ENCODE measurements at regions of chr12 and their contacts with region 1.

Region 1: DNA sequence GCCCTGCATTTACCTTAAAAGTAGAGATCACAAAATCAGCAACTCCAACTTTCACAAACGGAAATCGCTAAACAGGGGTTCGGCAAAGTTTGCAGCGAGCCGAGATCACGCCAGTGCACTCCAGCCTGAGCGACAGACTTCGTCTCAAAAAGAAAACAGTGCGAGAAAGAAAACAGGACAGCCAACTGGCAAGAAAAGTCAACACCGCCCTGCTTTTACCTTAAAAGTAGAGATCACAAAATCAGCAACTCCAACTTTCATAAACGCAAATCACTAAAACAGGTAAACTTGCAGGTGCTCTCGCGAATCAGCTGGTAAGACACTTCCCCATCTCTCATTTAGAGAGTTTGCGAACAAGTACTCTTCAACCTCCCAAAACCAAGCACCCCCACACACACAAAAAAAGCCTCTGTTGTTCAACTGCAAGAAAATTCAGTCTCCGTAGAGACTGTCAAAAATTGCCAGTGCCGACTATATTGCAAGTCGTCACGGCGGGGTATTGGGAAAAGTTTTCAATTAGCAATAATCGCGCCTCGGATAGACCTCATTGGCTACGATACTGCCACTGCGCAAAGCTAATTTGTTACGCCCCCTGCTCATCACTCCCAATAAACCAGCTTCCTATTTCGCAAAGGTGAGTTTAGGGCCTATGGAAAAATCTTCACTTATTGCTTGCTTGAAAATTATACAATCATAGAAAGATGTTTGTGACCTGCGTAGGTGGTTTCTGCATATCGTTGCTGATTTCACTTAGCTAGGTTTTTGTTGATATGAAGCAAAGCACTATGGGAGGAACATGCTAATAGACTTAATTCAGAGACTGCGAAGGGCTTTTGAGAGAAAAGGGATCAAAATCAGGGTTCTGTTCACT is at the start of gene RNU4-1:
- DNase-seq: peak; percentile 62
- ATAC-seq: peak; percentile 40
- H3K4me3 Mint-ChIP-seq: no peak within 1 kb of the TSS
- H3K27ac Mint-ChIP-seq: no peak within 1 kb of the TSS
- H3K4me1 Mint-ChIP-seq: peaks cover 5% of the 10 kb centered on the region
- H3K27me3 Mint-ChIP-seq: no peaks in the 10 kb centered on the region
- total RNA-seq, gene RNU4-1: 1,307 to 1,401 TPM

Region 2: DNA sequence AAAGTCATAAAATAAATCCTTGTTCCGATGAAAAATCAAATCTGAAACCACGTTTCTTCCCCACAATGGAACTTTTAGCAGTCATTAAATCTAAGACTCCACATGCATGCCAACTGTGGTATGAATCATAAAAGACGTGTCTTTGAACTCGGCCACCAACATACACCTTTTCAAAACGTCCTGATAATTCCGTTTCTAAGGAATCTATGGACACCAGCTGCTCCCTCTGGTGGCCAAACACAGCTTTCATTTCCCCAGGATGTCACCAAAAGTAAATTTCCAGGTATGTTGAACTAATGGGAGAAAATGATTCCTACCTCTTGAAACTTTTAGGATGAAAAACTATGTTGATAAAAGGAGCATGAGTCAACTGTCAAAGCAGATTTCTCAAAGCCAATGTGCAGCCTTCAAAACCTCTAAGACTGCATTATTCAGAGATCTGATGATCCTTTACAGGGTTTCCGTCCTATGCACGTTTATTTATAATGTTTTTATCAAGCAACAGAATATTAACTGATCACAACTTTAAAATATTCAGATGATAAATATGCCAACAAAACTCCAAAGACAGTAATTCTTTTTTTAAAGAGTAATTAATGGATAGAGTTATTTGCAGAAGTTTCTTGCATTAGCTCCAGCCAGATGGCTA is 512.0 kb before region 1 on chr12:
- POLR2A ChIA-PET with region 1: no interaction called
- DNase-seq: no peak
- ATAC-seq: no peak
- H3K4me3 Mint-ChIP-seq: no peak overlapping the region
- H3K27ac Mint-ChIP-seq: no peak overlapping the region
- H3K4me1 Mint-ChIP-seq: peaks cover 5% of the 10 kb centered on the region
- H3K27me3 Mint-ChIP-seq: no peaks in the 10 kb centered on the region

Region 3: GRCh38 chr12:120007272-120007671 is 285.6 kb before region 1 on chr12:
- POLR2A ChIA-PET with region 1: interaction called, 22 read pairs
- DNase-seq: no peak
- ATAC-seq: peak; percentile 85
- H3K4me3 Mint-ChIP-seq: peak overlapping the region; percentile 67
- H3K27ac Mint-ChIP-seq: peak overlapping the region; percentile 90
- H3K4me1 Mint-ChIP-seq: peaks cover 49% of the 10 kb centered on the region
- H3K27me3 Mint-ChIP-seq: no peaks in the 10 kb centered on the region

Region 4: DNA sequence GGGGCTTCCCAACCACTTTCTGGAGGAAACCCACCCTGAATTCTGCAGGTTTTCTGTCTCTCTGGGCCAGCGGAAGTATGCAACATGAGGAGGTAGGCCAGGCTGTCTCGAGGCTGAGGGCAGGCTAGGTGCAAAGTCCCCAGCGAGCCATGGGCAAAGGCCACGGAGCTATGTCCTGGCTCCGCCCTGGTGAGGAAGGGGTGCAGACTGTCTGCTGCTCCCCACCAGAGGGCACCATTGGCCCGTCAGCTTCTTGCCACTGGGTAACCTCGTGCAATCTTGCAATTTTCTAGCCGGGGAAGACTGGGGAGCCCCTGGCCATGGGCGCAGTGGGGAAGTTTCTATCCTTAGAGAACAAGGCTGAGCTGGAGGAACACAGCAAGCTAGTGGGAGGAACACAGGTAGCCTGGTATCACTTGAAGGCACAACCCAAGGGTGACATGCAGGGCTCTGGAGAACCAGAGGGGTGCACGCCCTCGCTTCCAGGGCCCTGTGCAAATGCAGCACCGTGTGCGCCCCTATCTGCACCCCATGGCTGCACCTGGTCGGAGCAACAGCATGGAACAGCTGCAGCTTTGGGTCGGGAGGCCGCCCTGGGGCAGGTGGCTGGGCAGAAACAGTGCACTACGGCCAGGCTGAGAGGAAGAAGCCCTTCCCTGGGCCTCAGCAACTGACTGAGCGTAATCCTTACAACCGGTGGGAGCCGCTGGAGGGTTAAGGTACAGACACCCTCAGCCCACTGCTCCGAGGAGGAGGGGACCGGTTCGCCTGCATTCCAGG is 64.4 kb before region 1 on chr12:
- POLR2A ChIA-PET with region 1: interaction called, 199 read pairs
- DNase-seq: peak; percentile 89
- ATAC-seq: peak; percentile 69
- H3K4me3 Mint-ChIP-seq: peak overlapping the region; percentile 58
- H3K27ac Mint-ChIP-seq: peak overlapping the region; percentile 51
- H3K4me1 Mint-ChIP-seq: peaks cover 65% of the 10 kb centered on the region
- H3K27me3 Mint-ChIP-seq: no peaks in the 10 kb centered on the region

Region 5: DNA sequence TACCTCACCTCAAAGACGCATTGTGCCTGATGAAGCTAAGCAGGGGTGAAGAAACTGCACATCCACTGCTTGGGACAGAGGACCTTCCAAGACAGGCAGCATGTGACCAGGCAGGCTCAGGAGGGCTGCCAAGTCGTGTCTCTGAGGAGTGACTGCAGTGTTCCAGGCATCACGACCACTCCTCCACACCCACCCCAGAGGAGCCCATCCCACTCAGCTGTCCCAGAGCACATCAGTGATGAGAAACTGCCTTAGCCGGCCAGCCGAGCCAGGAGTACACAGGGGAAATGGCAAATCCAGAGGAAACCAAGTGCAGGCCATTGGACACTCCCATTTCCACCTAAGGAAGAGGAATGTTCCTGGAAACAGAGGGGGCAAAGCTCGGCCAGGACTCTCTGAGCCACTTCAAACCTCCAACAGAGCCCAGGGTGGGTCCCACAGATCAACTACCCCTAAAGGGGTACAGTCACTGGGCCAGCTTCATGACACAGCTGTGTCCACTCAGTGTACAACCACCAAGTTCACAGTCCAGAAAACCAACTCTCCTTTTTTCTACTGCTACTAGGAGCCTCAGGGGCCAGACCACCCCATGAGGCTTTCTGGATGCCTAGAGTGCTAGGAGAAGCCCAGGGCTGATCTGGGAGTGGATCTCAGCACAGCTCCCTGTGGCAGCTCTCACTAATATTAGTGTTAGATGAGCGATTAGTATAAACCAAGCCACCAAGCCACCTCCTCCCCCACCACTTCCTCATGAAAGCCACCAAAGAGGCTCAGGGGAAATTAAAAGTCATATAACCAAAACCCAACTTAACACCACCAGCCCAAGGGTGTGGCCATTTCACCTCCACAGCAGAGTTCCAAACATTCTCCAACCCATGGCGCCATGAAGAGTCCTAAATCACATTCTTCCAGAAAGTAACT is 42.8 kb before region 1 on chr12:
- POLR2A ChIA-PET with region 1: interaction called, 110 read pairs
- DNase-seq: peak; percentile 48
- ATAC-seq: peak; percentile 4
- H3K4me3 Mint-ChIP-seq: peak overlapping the region; percentile 80
- H3K27ac Mint-ChIP-seq: peak overlapping the region; percentile 90
- H3K4me1 Mint-ChIP-seq: peaks cover 59% of the 10 kb centered on the region
- H3K27me3 Mint-ChIP-seq: peaks cover 2% of the 10 kb centered on the region

Region 6: DNA sequence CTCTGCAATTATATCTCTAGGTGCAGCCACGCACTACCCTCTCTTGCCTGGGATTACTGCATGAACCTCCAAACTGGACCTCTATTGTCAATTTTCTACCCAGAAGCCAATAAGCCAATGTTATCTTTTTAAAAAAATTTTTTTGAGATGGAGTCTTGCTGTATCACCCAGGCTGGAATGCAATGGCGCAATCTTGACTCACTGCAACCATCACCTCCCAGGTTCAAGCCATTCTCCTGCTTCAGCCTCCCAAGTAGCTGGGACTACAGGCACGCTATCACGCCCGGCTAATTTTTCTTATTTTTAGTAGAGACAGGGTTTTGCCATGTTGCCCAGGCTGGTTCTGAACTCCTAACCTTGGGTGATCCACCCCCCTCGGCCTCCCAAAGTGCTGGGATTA is 16.2 kb before region 1 on chr12:
- POLR2A ChIA-PET with region 1: interaction called, 17 read pairs
- DNase-seq: no peak
- ATAC-seq: no peak
- H3K4me3 Mint-ChIP-seq: no peak overlapping the region
- H3K27ac Mint-ChIP-seq: no peak overlapping the region
- H3K4me1 Mint-ChIP-seq: no peaks in the 10 kb centered on the region
- H3K27me3 Mint-ChIP-seq: peaks cover 2% of the 10 kb centered on the region

Region 7: DNA sequence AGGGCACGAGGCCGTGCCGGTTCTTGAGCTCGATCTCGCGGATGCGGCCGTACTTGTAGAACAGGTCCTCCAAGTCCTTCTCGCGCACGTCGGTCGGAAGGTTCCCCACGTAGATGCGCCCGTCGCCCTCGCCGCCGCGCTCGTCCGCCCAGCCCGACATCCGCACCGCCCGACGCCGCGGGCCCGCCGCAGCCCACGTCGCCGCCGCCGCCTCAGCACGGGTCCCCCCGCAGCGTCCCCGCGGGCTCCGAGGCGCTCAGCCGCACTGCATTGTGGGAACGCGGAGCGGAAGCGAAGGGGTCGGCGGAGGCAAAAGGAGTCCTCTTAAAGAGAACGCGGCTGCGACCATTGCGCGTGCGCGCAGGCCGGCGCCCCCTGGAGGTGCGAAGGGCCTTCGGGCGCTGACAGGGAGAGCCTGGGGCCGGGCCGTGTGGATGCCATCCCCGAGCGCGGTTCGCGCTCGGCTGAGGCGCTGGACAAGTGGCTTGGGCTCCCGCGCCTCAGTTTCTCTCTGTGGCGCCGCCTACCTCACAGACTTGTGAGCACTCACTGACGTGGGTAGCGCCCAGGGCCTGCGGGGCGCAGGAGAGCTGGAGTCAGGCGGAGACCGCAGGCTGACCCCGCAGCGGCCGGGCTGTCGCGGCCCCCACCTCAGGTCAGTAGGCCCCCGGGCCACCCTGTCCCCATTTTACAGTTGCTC is 176.7 kb after region 1 on chr12 and contains the start of gene SRSF9:
- POLR2A ChIA-PET with region 1: interaction called, 21 read pairs
- DNase-seq: peak; percentile 99
- ATAC-seq: peak; percentile 95
- H3K4me3 Mint-ChIP-seq: peak within 1 kb of the TSS; percentile 97
- H3K27ac Mint-ChIP-seq: peak within 1 kb of the TSS; percentile 86
- H3K4me1 Mint-ChIP-seq: peaks cover 28% of the 10 kb centered on the region
- H3K27me3 Mint-ChIP-seq: no peaks in the 10 kb centered on the region
- total RNA-seq, gene SRSF9: 164 to 166 TPM